ENCODE measurements at regions of chr4 and their contacts with region 1.

Region 1: DNA sequence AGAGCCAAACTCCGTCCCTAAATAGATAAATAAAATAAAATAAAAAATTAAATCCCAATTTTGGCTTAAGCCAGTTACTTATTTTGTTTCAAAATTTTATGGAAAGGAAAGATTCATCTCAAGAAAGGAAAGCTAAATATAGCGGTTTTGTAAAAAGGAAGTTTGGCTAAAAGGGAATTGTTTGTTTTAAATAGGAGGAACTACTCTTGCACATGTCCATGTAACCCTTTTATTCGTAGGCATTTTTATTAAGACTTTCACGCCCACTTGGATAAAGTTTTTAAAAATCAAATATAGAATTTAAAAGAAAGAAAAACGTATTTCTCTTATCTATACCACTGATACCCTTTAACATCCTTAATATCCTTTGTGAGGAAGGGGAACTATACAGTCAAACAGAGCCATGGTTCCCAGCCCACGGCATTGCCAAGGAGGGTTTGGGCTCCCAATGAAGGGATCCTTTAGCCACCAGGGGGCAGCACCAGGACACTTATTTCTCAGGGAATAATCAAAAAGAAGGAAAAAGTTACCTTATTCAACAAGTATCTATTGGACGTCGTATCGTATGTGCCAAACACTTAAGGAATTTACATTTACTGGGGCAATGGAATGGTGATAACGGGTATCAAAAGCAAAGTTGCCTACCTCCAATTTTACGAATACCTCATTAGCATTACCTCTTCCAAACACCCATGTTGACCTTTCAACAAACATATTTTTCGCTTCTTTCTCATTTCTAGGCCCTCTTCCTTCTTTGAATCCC is 27.7 kb downstream of the CDKN2AIP start:
- DNase-seq: peak; percentile 58 to 89 (median 80)
- ATAC-seq: peak; percentile 82
- H3K4me3 ChIP-seq: no peak overlapping the region
- H3K4me3 Mint-ChIP-seq: no peak overlapping the region
- H3K27ac ChIP-seq: no peak overlapping the region
- H3K27ac Mint-ChIP-seq: no peak overlapping the region
- H3K4me1 ChIP-seq: no peaks in the 10 kb centered on the region
- H3K4me1 Mint-ChIP-seq: peaks cover 5% of the 10 kb centered on the region
- H3K27me3 ChIP-seq: no peaks in the 10 kb centered on the region
- H3K27me3 Mint-ChIP-seq: no peaks in the 10 kb centered on the region
- CTCF ChIP-seq: peak; percentile 81

Region 2: GRCh38 chr4:183241322-183241640 is 230.8 kb before region 1 on chr4:
- CTCF ChIA-PET with region 1: no interaction called
- POLR2A ChIA-PET with region 1: no interaction called
- intact Hi-C with region 1: no loop called
- DNase-seq: no peak
- ATAC-seq: no peak
- H3K4me3 ChIP-seq: no peak overlapping the region
- H3K4me3 Mint-ChIP-seq: no peak overlapping the region
- H3K27ac ChIP-seq: no peak overlapping the region
- H3K27ac Mint-ChIP-seq: no peak overlapping the region
- H3K4me1 ChIP-seq: no peaks in the 10 kb centered on the region
- H3K4me1 Mint-ChIP-seq: no peaks in the 10 kb centered on the region
- H3K27me3 ChIP-seq: no peaks in the 10 kb centered on the region
- H3K27me3 Mint-ChIP-seq: peaks cover 6% of the 10 kb centered on the region
- CTCF ChIP-seq: no peak

Region 3: DNA sequence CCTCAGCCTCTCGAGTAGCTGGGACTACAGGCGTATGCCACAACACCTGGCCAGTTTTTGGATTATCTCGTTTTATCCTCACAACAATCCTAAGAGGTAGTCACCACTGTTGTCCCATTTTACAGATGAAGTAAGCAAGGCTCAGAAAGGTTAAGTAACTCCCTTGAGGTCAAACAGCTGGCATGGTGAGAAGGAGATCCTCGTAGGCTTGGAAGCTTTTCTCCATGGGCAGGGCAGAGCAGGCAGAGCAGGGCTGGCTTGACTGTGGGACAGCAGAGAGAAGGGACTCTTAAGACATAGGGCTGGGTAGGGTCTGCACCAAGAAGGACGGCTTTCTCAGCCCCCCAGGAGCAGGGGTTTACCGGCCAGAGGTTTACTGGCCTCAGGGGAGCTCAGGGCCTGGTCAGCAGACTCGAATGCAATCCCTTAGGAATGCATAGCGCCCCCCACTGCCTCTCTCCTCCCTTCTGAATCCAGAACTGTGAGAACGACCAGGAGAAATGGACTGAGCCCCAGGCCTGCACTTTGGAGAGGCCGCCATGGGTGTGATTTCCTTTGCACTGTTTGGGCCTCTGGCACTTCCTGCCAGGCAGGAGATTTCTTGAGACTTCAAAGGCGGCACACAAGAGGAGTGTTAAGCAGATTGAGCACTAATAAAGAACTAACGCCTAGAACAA is 41.7 kb before region 1 on chr4:
- CTCF ChIA-PET with region 1: no interaction called
- POLR2A ChIA-PET with region 1: no interaction called
- intact Hi-C with region 1: no loop called
- DNase-seq: peak in 7 of 9 experiments; percentile 6 to 65 (median 32)
- ATAC-seq: peak; percentile 58
- H3K4me3 ChIP-seq: no peak overlapping the region
- H3K4me3 Mint-ChIP-seq: peak overlapping the region; percentile 69
- H3K27ac ChIP-seq: peak overlapping the region; percentile 2 to 6
- H3K27ac Mint-ChIP-seq: peak overlapping the region; percentile 88
- H3K4me1 ChIP-seq: peaks cover 27% of the 10 kb centered on the region
- H3K4me1 Mint-ChIP-seq: peaks cover 33% of the 10 kb centered on the region
- H3K27me3 ChIP-seq: no peaks in the 10 kb centered on the region
- H3K27me3 Mint-ChIP-seq: no peaks in the 10 kb centered on the region
- CTCF ChIP-seq: no peak

Region 4: GRCh38 chr4:183602557-183603027 is 130.5 kb after region 1 on chr4:
- CTCF ChIA-PET with region 1: interaction called, 27 read pairs
- POLR2A ChIA-PET with region 1: no interaction called
- intact Hi-C with region 1: loop called (anchors 1 kb)
- DNase-seq: peak in 2 of 9 experiments; percentile 16 to 24
- ATAC-seq: no peak
- H3K4me3 ChIP-seq: no peak overlapping the region
- H3K4me3 Mint-ChIP-seq: no peak overlapping the region
- H3K27ac ChIP-seq: no peak overlapping the region
- H3K27ac Mint-ChIP-seq: no peak overlapping the region
- H3K4me1 ChIP-seq: no peaks in the 10 kb centered on the region
- H3K4me1 Mint-ChIP-seq: no peaks in the 10 kb centered on the region
- H3K27me3 ChIP-seq: no peaks in the 10 kb centered on the region
- H3K27me3 Mint-ChIP-seq: peaks cover 6% of the 10 kb centered on the region
- CTCF ChIP-seq: no peak

Region 5: GRCh38 chr4:183659029-183659871 is 187.1 kb after region 1 on chr4 and contains the starts of genes RWDD4 and TRAPPC11:
- CTCF ChIA-PET with region 1: no interaction called
- POLR2A ChIA-PET with region 1: no interaction called
- intact Hi-C with region 1: loop called (anchors 1 to 10 kb)
- DNase-seq: peak; percentile 90 to 99 (median 95)
- ATAC-seq: peak; percentile 96
- H3K4me3 ChIP-seq: peak within 1 kb of the TSS; percentile 72 to 83
- H3K4me3 Mint-ChIP-seq: peak within 1 kb of the TSS; percentile 92
- H3K27ac ChIP-seq: peak within 1 kb of the TSS; percentile 83 to 89
- H3K27ac Mint-ChIP-seq: peak within 1 kb of the TSS; percentile 91
- H3K4me1 ChIP-seq: peaks cover 25% of the 10 kb centered on the region
- H3K4me1 Mint-ChIP-seq: peaks cover 42% of the 10 kb centered on the region
- H3K27me3 ChIP-seq: no peaks in the 10 kb centered on the region
- H3K27me3 Mint-ChIP-seq: no peaks in the 10 kb centered on the region
- CTCF ChIP-seq: no peak
- total RNA-seq, gene RWDD4: 9.0 to 12.1 TPM
- total RNA-seq, gene TRAPPC11: 14.7 to 22.1 TPM

Region 6: GRCh38 chr4:184100297-184100885 is 628.3 kb after region 1 on chr4:
- CTCF ChIA-PET with region 1: no interaction called
- POLR2A ChIA-PET with region 1: no interaction called
- intact Hi-C with region 1: loop called in 1 of 2 experiments (anchors 5 kb)
- DNase-seq: peak in 7 of 9 experiments; percentile 12 to 53 (median 29)
- ATAC-seq: no peak
- H3K4me3 ChIP-seq: no peak overlapping the region
- H3K4me3 Mint-ChIP-seq: no peak overlapping the region
- H3K27ac ChIP-seq: no peak overlapping the region
- H3K27ac Mint-ChIP-seq: no peak overlapping the region
- H3K4me1 ChIP-seq: no peaks in the 10 kb centered on the region
- H3K4me1 Mint-ChIP-seq: peaks cover 5% of the 10 kb centered on the region
- H3K27me3 ChIP-seq: no peaks in the 10 kb centered on the region
- H3K27me3 Mint-ChIP-seq: peaks cover 28% of the 10 kb centered on the region
- CTCF ChIP-seq: peak; percentile 49

Region 7: DNA sequence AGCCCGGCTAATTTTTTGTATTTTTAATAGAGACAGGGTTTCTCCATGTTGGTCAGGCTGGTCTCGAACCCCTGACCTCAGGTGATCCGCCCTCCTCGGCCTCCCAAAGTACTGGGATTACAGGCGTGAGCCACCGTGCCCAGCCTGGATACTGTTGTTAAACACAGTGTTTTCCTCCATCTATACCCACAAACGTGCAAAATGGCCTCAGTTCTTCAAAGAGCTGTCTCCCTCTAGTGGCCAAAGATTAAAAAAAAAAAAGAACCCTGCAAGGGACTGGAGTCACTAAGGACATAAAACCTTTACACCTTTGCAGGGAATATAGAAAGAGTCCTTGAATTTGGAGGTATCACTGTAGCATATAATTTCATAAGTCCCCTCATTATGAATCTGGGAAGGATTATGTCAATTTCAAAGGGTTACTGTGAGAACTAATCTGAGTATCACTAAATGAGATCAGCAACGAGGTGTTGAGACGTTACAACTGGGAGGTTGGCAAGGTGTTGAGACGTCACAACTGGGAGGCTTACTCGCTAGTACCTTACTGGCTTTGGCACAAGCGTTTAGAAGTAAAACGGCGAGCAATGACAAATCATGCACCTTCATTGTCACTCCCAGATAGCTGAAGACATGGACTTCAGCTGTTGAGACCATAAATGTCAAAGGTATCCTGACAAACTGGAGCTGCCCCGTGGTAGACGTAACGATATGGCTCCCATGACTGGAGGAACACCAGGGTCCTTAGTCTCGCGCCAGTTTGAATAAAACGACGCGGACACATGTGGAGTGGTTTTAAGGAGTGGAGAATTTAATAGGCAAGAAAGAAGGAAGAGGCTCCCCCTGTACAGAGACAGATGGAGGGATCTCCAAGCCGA is 778.9 kb after region 1 on chr4:
- CTCF ChIA-PET with region 1: no interaction called
- POLR2A ChIA-PET with region 1: no interaction called
- intact Hi-C with region 1: loop called in 1 of 2 experiments (anchors 5 kb)
- DNase-seq: peak in 3 of 9 experiments; percentile 48 to 75 (median 67)
- ATAC-seq: peak; percentile 79
- H3K4me3 ChIP-seq: no peak overlapping the region
- H3K4me3 Mint-ChIP-seq: no peak overlapping the region
- H3K27ac ChIP-seq: no peak overlapping the region
- H3K27ac Mint-ChIP-seq: no peak overlapping the region
- H3K4me1 ChIP-seq: no peaks in the 10 kb centered on the region
- H3K4me1 Mint-ChIP-seq: peaks cover 2% of the 10 kb centered on the region
- H3K27me3 ChIP-seq: no peaks in the 10 kb centered on the region
- H3K27me3 Mint-ChIP-seq: peaks cover 6% of the 10 kb centered on the region
- CTCF ChIP-seq: peak; percentile 79

Region 8: GRCh38 chr4:184733654-184734524 is 1261.8 kb after region 1 on chr4 and contains the start of gene CENPU:
- CTCF ChIA-PET with region 1: no interaction called
- POLR2A ChIA-PET with region 1: no interaction called
- intact Hi-C with region 1: no loop called
- DNase-seq: peak; percentile 87 to 97 (median 94)
- ATAC-seq: peak; percentile 95
- H3K4me3 ChIP-seq: peak within 1 kb of the TSS; percentile 74 to 79
- H3K4me3 Mint-ChIP-seq: peak within 1 kb of the TSS; percentile 87
- H3K27ac ChIP-seq: peak within 1 kb of the TSS; percentile 2 to 43
- H3K27ac Mint-ChIP-seq: peak within 1 kb of the TSS; percentile 84
- H3K4me1 ChIP-seq: peaks cover 8% of the 10 kb centered on the region
- H3K4me1 Mint-ChIP-seq: peaks cover 18% of the 10 kb centered on the region
- H3K27me3 ChIP-seq: no peaks in the 10 kb centered on the region
- H3K27me3 Mint-ChIP-seq: no peaks in the 10 kb centered on the region
- CTCF ChIP-seq: no peak
- total RNA-seq, gene CENPU: 3.4 TPM

Measured in CD8-positive, alpha-beta T cell (primary cell).